ENCODE measurements at regions of chr18 and their contacts with region 1.

Region 1: DNA sequence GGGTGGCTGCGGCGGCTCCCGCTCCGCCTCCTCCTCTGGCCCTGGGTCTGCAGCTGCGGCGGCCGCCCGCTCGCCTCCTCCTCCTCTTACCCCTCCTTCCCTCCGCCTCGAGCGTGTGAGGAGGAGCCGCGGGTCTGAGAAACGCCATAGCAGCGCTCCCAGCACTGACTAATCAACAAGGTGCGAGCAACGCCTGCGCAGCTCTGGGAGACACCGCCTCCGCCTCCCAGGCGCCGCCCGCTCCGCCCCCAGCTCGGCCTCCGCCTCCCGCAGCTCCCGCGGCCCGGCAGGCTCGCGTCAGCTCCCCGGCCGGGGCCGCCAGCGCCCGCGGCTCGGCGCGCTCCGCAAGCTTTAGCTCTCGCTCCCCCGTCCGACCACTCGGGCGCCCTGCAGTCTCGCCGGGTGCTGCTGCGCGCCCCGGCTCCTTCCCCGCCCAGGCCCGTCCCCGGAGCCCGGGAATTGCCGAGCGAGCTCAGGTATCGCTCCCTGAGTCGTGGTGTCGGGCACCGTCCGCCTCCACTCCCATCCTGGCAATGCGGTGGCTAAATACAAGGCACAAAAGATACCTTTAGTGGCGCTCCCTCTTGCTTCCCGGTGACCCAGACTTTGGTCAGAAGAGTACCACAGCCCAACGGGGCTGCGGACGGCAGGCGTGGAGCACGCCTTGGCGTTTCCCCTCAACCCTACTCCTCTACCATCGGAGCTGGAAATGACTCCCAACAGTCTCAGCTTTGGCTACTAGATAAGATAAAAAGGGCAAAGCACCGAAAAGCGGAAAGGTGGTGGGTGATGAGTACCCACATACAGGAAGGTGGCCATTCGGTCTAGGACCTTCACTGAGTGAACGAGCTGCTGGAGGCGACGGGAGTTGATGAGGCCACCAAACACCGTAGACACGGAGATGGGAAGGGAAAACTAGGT is at the start of gene GAREM1:
- DNase-seq: peak; percentile 83
- ATAC-seq: peak; percentile 92
- H3K4me3 ChIP-seq: peak within 1 kb of the TSS in 4 of 5 experiments; percentile 19 to 54 (median 48)
- H3K4me3 Mint-ChIP-seq: peak within 1 kb of the TSS; percentile 84
- H3K27ac ChIP-seq: no peak within 1 kb of the TSS
- H3K27ac Mint-ChIP-seq: no peak within 1 kb of the TSS
- H3K4me1 ChIP-seq: peaks cover 21 to 24% of the 10 kb centered on the region in 2 donors
- H3K4me1 Mint-ChIP-seq: peaks cover 25% of the 10 kb centered on the region
- H3K27me3 ChIP-seq: peaks cover 2 to 54% (median 26%) of the 10 kb centered on the region in 4 experiments
- H3K27me3 Mint-ChIP-seq: peaks cover 66% of the 10 kb centered on the region
- CTCF ChIP-seq: peak; percentile 24
- total RNA-seq, gene GAREM1: not detected in 2 replicates

Region 2: DNA sequence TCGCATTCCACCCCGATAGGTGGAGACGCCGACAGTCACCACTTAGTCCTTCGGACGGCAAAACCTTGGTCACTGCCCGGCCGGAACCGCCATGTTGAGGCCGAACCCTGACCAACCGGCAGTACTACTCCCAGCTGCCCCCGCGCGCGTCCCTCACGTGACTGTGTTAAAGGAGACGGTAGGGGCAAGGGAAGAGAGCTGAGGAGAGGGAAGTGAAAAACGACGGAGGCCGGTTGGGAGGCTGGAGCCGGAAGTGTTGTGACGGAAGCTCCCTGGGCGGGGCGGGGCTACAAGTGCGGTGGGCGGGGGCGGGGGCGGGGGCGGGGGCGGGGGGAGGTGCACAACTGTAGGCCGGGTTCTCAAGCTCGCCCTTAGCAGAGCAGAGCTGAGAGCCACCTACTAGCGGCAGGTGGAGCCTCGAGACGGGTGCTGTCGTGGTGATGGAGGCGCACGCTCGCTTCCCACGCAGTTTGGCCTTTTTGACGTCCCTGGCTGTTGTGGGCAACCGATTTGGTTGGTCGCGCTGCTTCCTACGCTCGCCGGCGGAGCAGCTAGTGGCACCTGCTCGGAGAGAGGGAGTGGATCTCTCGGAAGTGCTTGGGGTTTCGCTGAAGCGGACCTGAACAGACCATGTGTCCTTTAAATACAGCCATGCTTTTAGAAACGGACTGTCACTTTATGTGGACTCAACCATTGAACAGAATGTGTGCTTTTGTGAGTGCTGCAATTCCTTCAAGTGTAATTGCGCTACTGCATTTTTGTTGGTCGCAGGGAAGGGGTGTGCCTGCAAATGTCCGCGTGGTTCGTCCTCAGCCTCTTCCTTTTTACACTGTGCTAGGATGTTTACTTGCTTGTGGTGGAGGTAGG is 527.7 kb before region 1 on chr18 and contains the start of gene TRAPPC8:
- CTCF ChIA-PET with region 1: no interaction called
- POLR2A ChIA-PET with region 1: no interaction called
- intact Hi-C with region 1: loop called (anchors 5 kb)
- DNase-seq: peak; percentile 98
- ATAC-seq: peak; percentile 80
- H3K4me3 ChIP-seq: peak within 1 kb of the TSS; percentile 83 to 97 (median 94)
- H3K4me3 Mint-ChIP-seq: peak within 1 kb of the TSS; percentile 100
- H3K27ac ChIP-seq: peak within 1 kb of the TSS; percentile 98
- H3K27ac Mint-ChIP-seq: peak within 1 kb of the TSS; percentile 100
- H3K4me1 ChIP-seq: peaks cover 24 to 31% of the 10 kb centered on the region in 2 donors
- H3K4me1 Mint-ChIP-seq: peaks cover 39% of the 10 kb centered on the region
- H3K27me3 ChIP-seq: no peaks in the 10 kb centered on the region
- H3K27me3 Mint-ChIP-seq: no peaks in the 10 kb centered on the region
- CTCF ChIP-seq: no peak
- total RNA-seq, gene TRAPPC8: 89.8 and 95.5 TPM in 2 replicates

Measured in B cell (primary cell).